ENCODE measurements at regions of chr14 and their contacts with region 1.

Region 1: DNA sequence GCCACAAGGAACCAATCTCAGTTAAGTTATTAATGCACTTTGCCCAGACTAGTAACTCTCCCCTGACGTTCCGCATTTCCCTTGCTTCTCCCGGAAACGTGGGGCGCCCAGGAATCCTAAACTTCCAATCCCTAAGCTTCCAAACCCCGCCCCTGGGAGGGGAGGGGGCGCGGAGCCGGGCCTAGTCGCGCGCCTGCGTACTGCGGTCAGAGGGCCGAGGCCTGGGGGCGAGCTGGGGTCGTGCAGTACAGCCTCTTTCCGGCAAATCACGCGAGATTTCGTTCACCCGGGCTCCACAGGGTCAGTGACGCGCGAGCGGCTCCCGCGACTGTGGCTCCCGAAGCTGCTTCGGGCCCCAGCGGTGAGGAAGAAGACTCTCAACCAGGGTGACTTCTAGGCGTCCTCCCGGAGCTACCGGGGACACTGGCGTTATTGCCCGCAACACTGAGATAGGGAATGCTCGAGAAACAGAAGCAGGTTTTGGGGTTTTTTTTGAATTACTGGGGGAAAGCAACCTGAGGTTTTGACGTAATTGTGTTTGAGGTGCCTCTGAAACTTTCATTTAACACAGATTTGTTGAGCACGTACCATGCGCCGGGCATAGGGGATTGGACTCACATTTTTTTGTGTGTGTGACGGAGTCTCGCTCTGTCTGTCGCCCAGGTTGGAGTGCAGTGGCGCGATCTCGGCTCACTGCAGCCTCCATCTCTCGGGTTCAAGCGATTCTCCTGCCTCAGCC is at the start of gene PTGR2:
- DNase-seq: peak; percentile 95 to 97
- ATAC-seq: peak; percentile 98 to 99 (median 98)
- H3K4me3 ChIP-seq: peak within 1 kb of the TSS; percentile 49 to 82 (median 62)
- H3K27ac ChIP-seq: peak within 1 kb of the TSS; percentile 76 to 97 (median 93)
- H3K4me1 ChIP-seq: peaks cover 4 to 17% (median 15%) of the 10 kb centered on the region in 9 donors
- H3K27me3 ChIP-seq: no peaks in the 10 kb centered on the region
- CTCF ChIP-seq: peak in 2 of 9 donors; percentile 14 to 18
- total RNA-seq, gene PTGR2: 24.8 to 48.7 (median 36.7) TPM

Region 2: GRCh38 chr14:73886449-73887317 is 34.9 kb after region 1 on chr14 and contains the start of gene ZNF410:
- intact Hi-C with region 1: loop called in 2 of 10 experiments (anchors 5 kb)
- DNase-seq: peak; percentile 93 to 94
- ATAC-seq: peak; percentile 99 to 100 (median 100)
- H3K4me3 ChIP-seq: peak within 1 kb of the TSS; percentile 74 to 95 (median 85)
- H3K27ac ChIP-seq: peak within 1 kb of the TSS; percentile 76 to 98 (median 93)
- H3K4me1 ChIP-seq: peaks cover 0 to 39% (median 24%) of the 10 kb centered on the region in 9 donors
- H3K27me3 ChIP-seq: no peaks in the 10 kb centered on the region
- CTCF ChIP-seq: no peak
- total RNA-seq, gene ZNF410: 15.3 to 23.7 (median 18.8) TPM

Measured in heart right ventricle (tissue), 16 donors.